Endothelial cell of umbilical vein (primary cell): ENCODE measurements at regions of chr17 and their contacts with region 1.

Region 1: GRCh38 chr17:17141860-17142552 is 64.1 kb downstream of the PLD6 start:
- DNase-seq: peak; percentile 50
- H3K4me3 ChIP-seq: no peak overlapping the region
- H3K27ac ChIP-seq: no peak overlapping the region
- H3K4me1 ChIP-seq: peaks cover 12% of the 10 kb centered on the region
- H3K27me3 ChIP-seq: no peaks in the 10 kb centered on the region
- CTCF ChIP-seq: peak; percentile 88 to 94
- POLR2A ChIP-seq: no peak

Region 2: DNA sequence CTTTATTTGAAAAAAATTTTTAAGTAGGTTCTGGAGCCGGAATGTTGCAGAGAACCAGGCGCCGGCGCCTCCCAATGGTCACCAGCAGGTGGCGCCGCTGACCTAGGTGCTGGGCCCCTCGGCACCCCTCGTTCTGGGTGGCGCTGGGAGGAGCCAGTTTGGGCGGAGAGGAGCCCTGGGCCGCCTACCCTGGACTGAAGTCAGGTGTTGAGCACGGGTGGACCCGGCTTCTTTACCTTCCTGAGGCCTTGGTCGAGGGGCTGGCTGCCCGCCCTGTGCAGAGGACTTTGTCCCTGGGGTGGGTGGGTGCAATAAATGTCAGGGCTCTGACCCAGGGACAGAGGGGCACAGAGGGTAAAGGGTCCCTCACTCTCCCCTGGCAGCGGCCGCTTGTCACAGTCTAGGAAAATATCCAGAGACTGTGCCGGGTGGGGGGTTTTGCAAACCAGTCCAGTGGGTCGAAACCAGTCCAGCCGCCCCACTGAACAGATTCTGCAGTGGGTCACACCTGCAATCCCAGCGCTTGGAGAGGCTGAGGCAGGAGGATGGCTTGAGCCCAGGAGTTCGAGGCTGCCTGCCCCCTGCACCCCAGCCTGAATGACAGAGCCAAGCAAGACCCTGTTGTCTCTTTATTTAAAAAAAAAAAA is 140.0 kb before region 1 on chr17:
- CTCF ChIA-PET with region 1: interaction called, 6 read pairs
- POLR2A ChIA-PET with region 1: no interaction called
- dilution Hi-C with region 1: no loop called
- intact Hi-C with region 1: loop called (anchors 2 kb)
- DNase-seq: peak; percentile 44
- H3K4me3 ChIP-seq: no peak overlapping the region
- H3K27ac ChIP-seq: no peak overlapping the region
- H3K4me1 ChIP-seq: peaks cover 3% of the 10 kb centered on the region
- H3K27me3 ChIP-seq: no peaks in the 10 kb centered on the region
- CTCF ChIP-seq: peak; percentile 92 to 93
- POLR2A ChIP-seq: no peak

Region 3: GRCh38 chr17:17165666-17166308 is 23.8 kb after region 1 on chr17:
- CTCF ChIA-PET with region 1: interaction called, 10 read pairs
- POLR2A ChIA-PET with region 1: no interaction called
- dilution Hi-C with region 1: no loop called
- intact Hi-C with region 1: no loop called
- DNase-seq: no peak
- H3K4me3 ChIP-seq: no peak overlapping the region
- H3K27ac ChIP-seq: no peak overlapping the region
- H3K4me1 ChIP-seq: no peaks in the 10 kb centered on the region
- H3K27me3 ChIP-seq: no peaks in the 10 kb centered on the region
- CTCF ChIP-seq: no peak
- POLR2A ChIP-seq: no peak

Region 4: DNA sequence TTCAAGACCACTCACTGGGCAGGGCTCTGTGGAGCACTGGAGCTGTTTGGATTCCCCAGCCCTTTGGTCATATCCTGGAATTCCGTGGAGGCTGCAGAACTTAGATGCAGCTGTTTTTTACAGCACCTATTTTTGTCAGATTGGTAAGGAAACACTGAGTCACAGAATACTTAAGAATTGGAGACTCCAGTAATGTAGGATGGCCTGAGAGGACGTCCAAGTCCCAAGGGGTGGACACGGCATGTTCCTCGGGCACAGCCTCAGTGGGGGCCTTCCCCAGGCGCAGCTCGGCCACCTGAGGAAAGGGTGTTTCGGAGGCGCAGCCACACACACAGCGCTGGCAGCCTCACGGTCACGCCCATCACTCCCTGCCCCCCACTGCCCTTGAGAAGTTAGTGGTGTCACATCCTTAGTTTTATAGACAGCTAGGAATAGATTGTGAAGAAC is 49.4 kb after region 1 on chr17:
- CTCF ChIA-PET with region 1: interaction called, 16 read pairs
- POLR2A ChIA-PET with region 1: no interaction called
- dilution Hi-C with region 1: no loop called
- intact Hi-C with region 1: no loop called
- DNase-seq: peak; percentile 93
- H3K4me3 ChIP-seq: no peak overlapping the region
- H3K27ac ChIP-seq: peak overlapping the region; percentile 79
- H3K4me1 ChIP-seq: peaks cover 21% of the 10 kb centered on the region
- H3K27me3 ChIP-seq: no peaks in the 10 kb centered on the region
- CTCF ChIP-seq: no peak
- POLR2A ChIP-seq: peak; percentile 34

Region 5: DNA sequence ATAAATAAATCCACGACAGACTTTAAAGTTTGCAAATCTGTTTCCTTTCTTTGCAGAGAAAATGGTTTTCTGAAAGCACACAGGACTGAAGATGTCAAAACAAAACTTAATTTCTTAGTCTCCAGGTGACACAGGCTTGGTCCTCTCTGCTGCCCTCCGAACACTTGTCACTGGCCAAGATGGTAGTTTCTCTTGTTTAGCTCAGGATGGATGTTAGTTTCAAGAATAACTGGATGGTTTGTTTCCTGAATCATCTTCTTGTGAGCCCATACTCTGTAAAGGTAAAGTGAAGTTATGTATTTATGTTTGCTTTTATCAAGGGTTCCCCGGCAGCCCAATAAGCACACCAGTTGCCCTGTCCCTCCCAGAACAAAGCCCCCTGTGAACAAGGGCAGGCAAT is 104.9 kb after region 1 on chr17:
- CTCF ChIA-PET with region 1: interaction called, 10 read pairs
- POLR2A ChIA-PET with region 1: no interaction called
- dilution Hi-C with region 1: no loop called
- intact Hi-C with region 1: no loop called
- DNase-seq: no peak
- H3K4me3 ChIP-seq: no peak overlapping the region
- H3K27ac ChIP-seq: no peak overlapping the region
- H3K4me1 ChIP-seq: no peaks in the 10 kb centered on the region
- H3K27me3 ChIP-seq: no peaks in the 10 kb centered on the region
- CTCF ChIP-seq: no peak
- POLR2A ChIP-seq: no peak

Region 6: DNA sequence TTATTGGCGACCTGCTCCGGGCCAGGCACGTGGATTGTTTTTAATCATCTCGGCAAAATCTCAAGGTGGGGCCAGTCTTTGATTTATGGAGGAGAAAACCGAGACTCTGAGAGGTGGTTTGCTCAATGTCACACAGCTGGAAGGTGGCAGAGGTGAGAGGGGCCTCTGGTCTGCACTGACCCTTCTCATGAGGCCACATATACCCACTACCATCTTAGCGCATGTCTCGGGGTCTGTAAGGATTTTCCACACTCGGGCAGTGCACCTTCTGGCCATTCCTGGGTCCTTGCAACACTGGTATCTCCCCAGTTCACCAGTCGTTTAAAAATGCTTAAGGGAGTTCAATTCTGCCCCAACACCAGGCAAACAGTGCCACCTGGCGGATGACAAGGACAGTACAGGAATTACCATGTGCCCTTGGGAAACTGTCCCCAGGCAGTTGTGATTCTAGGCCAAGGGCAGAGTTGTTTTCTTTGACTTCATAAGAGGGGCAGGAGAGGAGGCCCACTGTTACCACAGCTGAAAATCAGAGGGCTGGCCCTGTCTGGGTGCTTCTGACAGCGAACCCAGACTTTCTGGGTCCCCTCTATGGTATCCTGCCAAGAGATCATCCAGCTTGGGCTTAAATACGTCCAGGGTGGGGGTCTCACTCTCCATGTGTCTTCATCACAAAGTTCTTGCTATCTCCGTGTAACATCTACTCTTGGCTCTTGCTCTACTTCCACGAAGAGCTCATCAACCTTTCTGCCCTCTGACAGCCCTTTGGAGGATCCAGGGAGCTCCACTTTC is 499.8 kb after region 1 on chr17:
- CTCF ChIA-PET with region 1: interaction called, 10 read pairs
- POLR2A ChIA-PET with region 1: no interaction called
- dilution Hi-C with region 1: no loop called
- intact Hi-C with region 1: no loop called
- DNase-seq: peak; percentile 74
- H3K4me3 ChIP-seq: no peak overlapping the region
- H3K27ac ChIP-seq: no peak overlapping the region
- H3K4me1 ChIP-seq: no peaks in the 10 kb centered on the region
- H3K27me3 ChIP-seq: no peaks in the 10 kb centered on the region
- CTCF ChIP-seq: peak; percentile 82 to 85
- POLR2A ChIP-seq: no peak